PC-3 (cell line): ENCODE measurements at regions of chr6 and their contacts with region 1.

Region 1: GRCh38 chr6:111873178-111874024 is at the start of gene FYN:
- DNase-seq: peak; percentile 93
- ATAC-seq: peak; percentile 85
- H3K4me3 ChIP-seq: peak within 1 kb of the TSS; percentile 71
- H3K27ac ChIP-seq: peak within 1 kb of the TSS; percentile 0; the same call in 1 of the 2 replicates
- H3K4me1 ChIP-seq: peaks cover 18% of the 10 kb centered on the region
- H3K27me3 ChIP-seq: no peaks in the 10 kb centered on the region
- CTCF ChIP-seq: no peak
- total RNA-seq, gene FYN: 27.6 and 57.4 TPM in 2 replicates

Region 2: DNA sequence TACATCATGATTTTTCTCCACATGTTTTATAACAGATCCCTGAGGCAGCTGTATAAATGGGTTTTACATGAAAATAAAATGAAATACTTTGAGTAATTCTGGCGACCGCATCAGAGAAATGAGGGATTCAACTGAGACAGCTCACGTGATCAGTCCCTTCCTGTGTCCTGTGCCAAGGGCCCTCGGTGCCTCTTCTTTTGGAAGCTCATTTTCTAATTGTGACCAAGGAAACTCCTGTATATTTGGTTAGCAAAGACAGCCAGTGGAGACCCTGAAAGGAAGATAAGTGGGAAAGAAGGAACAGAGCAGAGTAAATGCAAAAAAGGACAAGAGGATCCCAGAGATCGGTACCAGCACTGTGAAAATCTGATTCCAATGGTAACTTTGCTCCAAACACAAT is 130.0 kb before region 1 on chr6:
- CTCF ChIA-PET with region 1: no interaction called
- POLR2A ChIA-PET with region 1: interaction called, 18 read pairs
- intact Hi-C with region 1: no loop called
- DNase-seq: no peak
- ATAC-seq: no peak
- H3K4me3 ChIP-seq: no peak overlapping the region
- H3K27ac ChIP-seq: no peak overlapping the region
- H3K4me1 ChIP-seq: no peaks in the 10 kb centered on the region
- H3K27me3 ChIP-seq: no peaks in the 10 kb centered on the region
- CTCF ChIP-seq: no peak

Region 3: GRCh38 chr6:111925296-111925695 is 51.9 kb after region 1 on chr6:
- CTCF ChIA-PET with region 1: no interaction called
- POLR2A ChIA-PET with region 1: no interaction called
- intact Hi-C with region 1: loop called (anchors 5 kb)
- DNase-seq: peak; percentile 57
- ATAC-seq: peak; percentile 43
- H3K4me3 ChIP-seq: no peak overlapping the region
- H3K27ac ChIP-seq: peak overlapping the region; percentile 97
- H3K4me1 ChIP-seq: peaks cover 37% of the 10 kb centered on the region
- H3K27me3 ChIP-seq: no peaks in the 10 kb centered on the region
- CTCF ChIP-seq: no peak

Region 4: DNA sequence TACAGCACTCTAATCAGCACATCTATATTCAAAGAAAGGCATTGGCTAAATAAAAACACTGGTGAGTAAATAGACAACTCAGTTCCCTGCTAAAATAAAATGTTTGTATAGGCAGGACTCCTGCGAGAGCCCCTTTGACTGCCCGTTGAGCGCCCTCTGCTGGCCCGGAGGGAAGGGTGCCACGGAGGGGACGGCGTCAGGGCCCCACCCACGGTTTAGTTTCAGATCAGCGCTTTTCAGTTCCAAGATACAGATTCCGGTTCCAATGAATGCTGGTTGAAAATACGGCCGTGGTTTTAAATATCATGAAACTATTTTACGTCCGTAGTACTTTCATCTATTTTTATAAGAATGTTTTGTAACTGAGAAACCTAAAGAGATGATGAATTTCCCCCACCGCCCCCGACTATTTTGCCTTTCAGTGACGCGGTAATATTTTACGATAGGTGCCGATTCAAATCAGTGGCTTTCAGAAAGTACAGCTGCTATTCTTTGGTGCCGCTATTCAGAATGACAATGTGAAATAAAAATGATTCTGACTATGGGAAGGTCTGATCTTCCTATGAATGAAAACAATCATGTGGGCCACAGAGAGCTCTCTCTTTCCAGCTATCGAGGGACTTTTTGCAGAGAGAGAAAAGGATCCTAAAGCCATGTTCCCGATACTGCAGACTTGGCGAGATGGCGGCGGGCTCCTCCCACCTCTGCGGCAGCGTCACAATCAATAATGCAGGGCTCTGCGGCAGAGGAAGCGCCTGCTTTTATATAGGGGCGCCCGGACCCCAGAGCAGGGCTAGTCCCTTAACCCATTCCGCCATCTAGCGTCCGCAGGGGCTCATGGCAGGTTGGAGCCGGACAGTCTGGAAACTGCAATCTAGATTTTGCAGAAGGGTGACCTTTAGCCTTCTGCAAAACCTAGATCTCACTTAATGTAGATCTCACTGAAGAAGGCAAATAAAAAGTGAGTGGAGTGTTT is 169.9 kb after region 1 on chr6:
- CTCF ChIA-PET with region 1: no interaction called
- POLR2A ChIA-PET with region 1: no interaction called
- intact Hi-C with region 1: loop called (anchors 2 kb)
- DNase-seq: peak; percentile 79
- ATAC-seq: peak; percentile 90
- H3K4me3 ChIP-seq: peak overlapping the region; percentile 72
- H3K27ac ChIP-seq: peak overlapping the region; percentile 66
- H3K4me1 ChIP-seq: peaks cover 25% of the 10 kb centered on the region
- H3K27me3 ChIP-seq: no peaks in the 10 kb centered on the region
- CTCF ChIP-seq: peak; percentile 84

Region 5: GRCh38 chr6:112153926-112154607 is 280.7 kb after region 1 on chr6:
- CTCF ChIA-PET with region 1: no interaction called
- POLR2A ChIA-PET with region 1: no interaction called
- intact Hi-C with region 1: no loop called
- DNase-seq: peak; percentile 48
- ATAC-seq: no peak; the same call in 1 of the 2 replicates
- H3K4me3 ChIP-seq: no peak overlapping the region
- H3K27ac ChIP-seq: no peak overlapping the region
- H3K4me1 ChIP-seq: no peaks in the 10 kb centered on the region; the same call in 1 of the 2 replicates
- H3K27me3 ChIP-seq: no peaks in the 10 kb centered on the region
- CTCF ChIP-seq: no peak